ENCODE measurements at regions of chr12 and their contacts with region 1.

Region 1: GRCh38 chr12:6423267-6424007 is 21.3 kb upstream of the CD27 start:
- DNase-seq: peak; percentile 86
- H3K4me3 Mint-ChIP-seq: no peak overlapping the region
- H3K27ac Mint-ChIP-seq: peak overlapping the region; percentile 65
- H3K4me1 Mint-ChIP-seq: peaks cover 48% of the 10 kb centered on the region
- H3K27me3 Mint-ChIP-seq: peaks cover 20% of the 10 kb centered on the region

Region 2: DNA sequence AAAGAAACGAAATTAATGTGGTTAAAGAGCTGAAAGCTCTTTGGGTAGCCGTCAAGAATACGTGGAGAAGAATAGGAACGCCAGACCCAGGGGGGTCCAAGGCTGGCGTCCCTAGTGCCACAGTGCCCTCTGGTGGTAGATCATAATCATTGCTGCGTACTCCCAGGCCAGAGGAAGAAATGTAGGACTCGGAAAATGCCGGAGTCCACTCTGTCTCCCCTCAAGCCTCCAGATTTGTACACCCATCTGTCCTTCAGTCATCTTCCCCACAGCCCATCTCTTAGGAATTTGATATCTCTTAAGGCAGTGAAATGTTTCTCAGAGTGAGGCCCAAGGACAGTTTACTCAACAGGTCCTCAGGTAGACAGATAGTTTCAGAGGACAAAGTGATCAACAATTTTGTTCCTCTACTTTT is 138.4 kb before region 1 on chr12:
- CTCF ChIA-PET with region 1: no interaction called
- DNase-seq: peak; percentile 69
- H3K4me3 Mint-ChIP-seq: no peak overlapping the region
- H3K27ac Mint-ChIP-seq: no peak overlapping the region
- H3K4me1 Mint-ChIP-seq: no peaks in the 10 kb centered on the region
- H3K27me3 Mint-ChIP-seq: peaks cover 35% of the 10 kb centered on the region

Region 3: DNA sequence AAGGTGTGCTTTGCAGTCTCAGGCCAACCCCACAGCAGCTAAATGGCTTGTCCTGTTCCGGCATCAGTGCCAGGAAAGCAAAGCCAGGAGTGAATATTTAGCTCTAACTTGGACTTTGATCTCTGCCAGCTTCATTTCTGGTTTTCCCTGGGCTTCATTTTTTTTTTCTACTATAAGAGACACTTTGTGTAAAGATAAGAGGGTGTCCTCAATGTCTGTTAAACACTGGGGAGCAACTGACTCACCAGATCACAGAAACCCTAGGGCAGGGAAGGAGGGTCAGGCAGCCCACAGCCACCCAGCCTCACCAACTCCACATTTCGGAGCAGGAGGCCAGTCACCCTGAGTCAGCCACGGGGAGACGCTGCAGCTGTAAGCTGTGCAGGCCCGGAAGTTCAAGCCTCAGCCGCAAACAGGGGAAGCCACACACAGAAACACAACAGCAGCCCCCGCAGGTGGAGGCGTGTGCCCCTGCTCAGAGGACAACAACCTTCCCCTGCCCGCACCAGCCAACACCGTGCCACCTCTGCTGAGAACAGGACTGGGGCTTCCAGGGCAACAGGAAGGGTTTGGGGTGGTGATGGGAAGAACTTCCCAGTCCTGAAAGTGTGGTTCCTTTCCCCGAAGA is 87.9 kb before region 1 on chr12:
- CTCF ChIA-PET with region 1: interaction called, 39 read pairs
- DNase-seq: peak; percentile 91
- H3K4me3 Mint-ChIP-seq: no peak overlapping the region
- H3K27ac Mint-ChIP-seq: no peak overlapping the region
- H3K4me1 Mint-ChIP-seq: peaks cover 4% of the 10 kb centered on the region
- H3K27me3 Mint-ChIP-seq: no peaks in the 10 kb centered on the region

Region 4: GRCh38 chr12:6443361-6443983 is 20.0 kb after region 1 on chr12:
- CTCF ChIA-PET with region 1: interaction called, 41 read pairs
- DNase-seq: peak; percentile 26
- H3K4me3 Mint-ChIP-seq: peak overlapping the region; percentile 97
- H3K27ac Mint-ChIP-seq: peak overlapping the region; percentile 95
- H3K4me1 Mint-ChIP-seq: peaks cover 59% of the 10 kb centered on the region
- H3K27me3 Mint-ChIP-seq: no peaks in the 10 kb centered on the region

Region 5: GRCh38 chr12:6451348-6452244 is 28.2 kb after region 1 on chr12 and contains the start of gene TAPBPL:
- CTCF ChIA-PET with region 1: interaction called, 41 read pairs
- DNase-seq: peak; percentile 90
- H3K4me3 Mint-ChIP-seq: peak within 1 kb of the TSS; percentile 99
- H3K27ac Mint-ChIP-seq: peak within 1 kb of the TSS; percentile 99
- H3K4me1 Mint-ChIP-seq: peaks cover 82% of the 10 kb centered on the region
- H3K27me3 Mint-ChIP-seq: no peaks in the 10 kb centered on the region

Region 6: DNA sequence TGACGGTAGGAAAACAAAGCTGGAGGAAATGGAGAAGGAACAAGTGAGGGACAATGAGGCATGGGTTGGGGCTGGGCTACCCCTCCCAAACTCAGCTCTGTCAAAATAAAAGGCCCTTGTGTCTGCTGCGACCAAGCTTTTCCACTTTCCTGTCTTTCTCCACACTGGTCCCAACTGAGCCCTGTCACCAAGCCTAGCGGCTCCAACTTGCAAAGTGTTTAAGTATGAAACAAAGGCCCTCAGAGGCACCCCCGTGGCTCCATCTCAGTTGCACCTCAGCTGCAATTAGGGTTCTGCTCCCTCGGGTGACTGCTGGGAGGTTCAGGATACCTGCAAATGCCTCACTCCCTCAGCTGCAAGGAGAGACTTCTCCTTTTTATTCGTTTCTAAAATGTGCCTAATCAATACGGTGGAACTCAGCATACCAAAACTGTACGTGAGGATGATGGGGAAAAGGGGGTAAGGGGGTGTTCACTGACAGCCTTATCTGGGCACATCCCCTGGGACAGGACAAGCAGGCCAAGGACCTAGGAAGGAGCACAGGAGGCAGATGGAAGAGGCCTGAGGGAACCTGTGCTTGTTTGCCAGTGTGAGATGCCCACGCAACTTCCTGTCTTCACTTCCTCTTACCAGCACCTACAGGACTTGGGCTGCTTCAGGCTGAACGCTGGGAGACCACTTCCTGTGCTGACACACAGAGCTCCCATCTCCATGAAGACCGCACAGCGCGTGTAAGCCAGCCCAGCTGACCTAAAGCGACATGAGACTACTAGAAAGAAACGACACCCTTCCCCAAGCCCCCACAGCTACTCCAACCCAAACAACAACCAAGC is 38.2 kb after region 1 on chr12:
- CTCF ChIA-PET with region 1: interaction called, 231 read pairs
- DNase-seq: peak; percentile 92
- H3K4me3 Mint-ChIP-seq: peak overlapping the region; percentile 75
- H3K27ac Mint-ChIP-seq: peak overlapping the region; percentile 100
- H3K4me1 Mint-ChIP-seq: peaks cover 89% of the 10 kb centered on the region
- H3K27me3 Mint-ChIP-seq: no peaks in the 10 kb centered on the region

Region 7: GRCh38 chr12:6533923-6534694 is 110.7 kb after region 1 on chr12 and contains the start of gene GAPDH:
- CTCF ChIA-PET with region 1: interaction called, 55 read pairs
- DNase-seq: peak; percentile 93
- H3K4me3 Mint-ChIP-seq: peak within 1 kb of the TSS; percentile 98
- H3K27ac Mint-ChIP-seq: peak within 1 kb of the TSS; percentile 99
- H3K4me1 Mint-ChIP-seq: peaks cover 58% of the 10 kb centered on the region
- H3K27me3 Mint-ChIP-seq: peaks cover 9% of the 10 kb centered on the region

Region 8: DNA sequence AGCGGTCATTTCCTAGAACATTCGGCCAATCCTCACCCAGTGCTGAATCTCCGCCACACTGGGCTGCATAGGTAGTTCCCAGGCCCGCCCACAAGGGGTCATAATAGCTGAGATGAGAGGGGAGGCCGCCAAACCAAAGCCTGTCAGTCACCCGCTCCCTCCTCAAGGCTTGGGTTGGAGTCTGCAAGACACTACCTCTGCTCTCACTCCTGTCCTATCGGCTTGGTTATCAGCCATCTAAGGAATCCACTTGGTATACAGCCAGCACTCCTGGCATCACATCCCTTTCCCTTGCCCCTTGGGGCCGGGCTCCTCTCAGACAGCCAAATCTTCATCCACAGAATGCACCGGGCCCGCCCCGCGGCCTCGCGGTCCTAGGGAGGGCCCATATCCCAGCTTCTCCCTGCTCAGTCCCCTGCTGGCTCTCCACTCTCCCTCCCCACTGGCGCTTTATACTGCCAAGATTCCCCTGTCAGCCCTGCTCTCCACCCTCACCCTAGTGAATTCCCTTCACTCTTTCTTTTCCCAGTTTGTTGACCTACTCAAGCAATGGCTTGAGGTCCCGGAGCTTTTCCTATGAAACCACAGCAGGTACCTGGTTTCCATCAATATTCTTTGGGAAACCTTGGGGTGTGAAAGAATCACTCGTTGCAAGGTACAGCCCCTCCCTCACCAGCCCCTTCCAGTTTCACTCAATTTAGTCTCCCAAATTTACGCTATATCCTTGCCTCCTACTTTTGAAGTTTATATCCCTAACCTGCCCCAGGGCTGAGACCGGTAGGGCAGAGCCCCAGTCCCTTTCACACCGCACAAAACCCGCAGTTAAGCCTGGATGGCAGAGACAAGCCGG is 131.0 kb after region 1 on chr12:
- CTCF ChIA-PET with region 1: interaction called, 11 read pairs
- DNase-seq: peak; percentile 84
- H3K4me3 Mint-ChIP-seq: peak overlapping the region; percentile 89
- H3K27ac Mint-ChIP-seq: peak overlapping the region; percentile 29
- H3K4me1 Mint-ChIP-seq: peaks cover 60% of the 10 kb centered on the region
- H3K27me3 Mint-ChIP-seq: no peaks in the 10 kb centered on the region

Measured in activated naive CD4-positive, alpha-beta T cell treated with anti-CD3 and anti-CD28 coated beads, Interleukin-2, amount 10 ng/mL, durations not matched to agents 7 days and 5 days (primary cell).